PC-3 (cell line): ENCODE measurements at regions of chr10 and their contacts with region 1.

Region 1: GRCh38 chr10:63976538-63976937 is 455.3 kb downstream of the REEP3 start:
- DNase-seq: peak; percentile 74
- ATAC-seq: peak; percentile 97
- H3K4me3 ChIP-seq: no peak overlapping the region
- H3K27ac ChIP-seq: no peak overlapping the region
- H3K4me1 ChIP-seq: no peaks in the 10 kb centered on the region
- H3K27me3 ChIP-seq: no peaks in the 10 kb centered on the region
- CTCF ChIP-seq: peak; percentile 91

Region 2: GRCh38 chr10:63866075-63866746 is 110.3 kb before region 1 on chr10:
- CTCF ChIA-PET with region 1: interaction called, 36 read pairs
- POLR2A ChIA-PET with region 1: no interaction called
- intact Hi-C with region 1: no loop called
- DNase-seq: peak; percentile 87
- ATAC-seq: peak; percentile 88
- H3K4me3 ChIP-seq: peak overlapping the region; percentile 57
- H3K27ac ChIP-seq: no peak overlapping the region
- H3K4me1 ChIP-seq: peaks cover 11% of the 10 kb centered on the region
- H3K27me3 ChIP-seq: peaks cover 20% of the 10 kb centered on the region; the same call in 1 of the 2 replicates
- CTCF ChIP-seq: peak; percentile 92

Region 3: DNA sequence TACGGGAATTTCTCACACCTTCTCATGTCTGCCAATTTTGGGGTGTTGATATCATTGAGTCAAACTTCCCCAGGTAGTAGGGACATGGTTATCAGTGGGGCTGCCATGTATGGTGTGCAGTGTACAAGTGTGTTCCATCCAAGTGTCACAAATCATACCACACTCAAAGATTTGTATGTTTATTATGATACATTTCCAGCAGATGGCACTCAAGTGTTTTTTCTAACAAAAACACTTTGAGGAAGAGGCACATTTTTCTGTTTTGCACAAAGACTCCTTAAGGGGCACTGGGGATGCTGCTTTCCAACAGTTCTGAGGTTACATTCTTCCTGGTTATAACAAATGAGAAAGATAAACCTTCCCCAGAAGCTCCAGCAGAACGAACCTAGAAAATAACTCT is 40.8 kb before region 1 on chr10:
- CTCF ChIA-PET with region 1: no interaction called
- POLR2A ChIA-PET with region 1: no interaction called
- intact Hi-C with region 1: loop called (anchors 2 kb)
- DNase-seq: peak; percentile 56
- ATAC-seq: peak; percentile 69
- H3K4me3 ChIP-seq: no peak overlapping the region
- H3K27ac ChIP-seq: no peak overlapping the region
- H3K4me1 ChIP-seq: no peaks in the 10 kb centered on the region
- H3K27me3 ChIP-seq: peaks cover 47% of the 10 kb centered on the region; the same call in 1 of the 2 replicates
- CTCF ChIP-seq: peak; percentile 64